MCF 10A (cell line): ENCODE measurements at regions of chr14 and their contacts with region 1.

Region 1: GRCh38 chr14:45526715-45527549 is 273.9 kb upstream of the MIS18BP1 start:
- DNase-seq: peak; percentile 76
- H3K4me3 Mint-ChIP-seq: no peak overlapping the region
- H3K27ac Mint-ChIP-seq: no peak overlapping the region
- H3K4me1 Mint-ChIP-seq: no peaks in the 10 kb centered on the region
- H3K27me3 Mint-ChIP-seq: no peaks in the 10 kb centered on the region
- CTCF ChIP-seq: peak; percentile 75

Region 2: DNA sequence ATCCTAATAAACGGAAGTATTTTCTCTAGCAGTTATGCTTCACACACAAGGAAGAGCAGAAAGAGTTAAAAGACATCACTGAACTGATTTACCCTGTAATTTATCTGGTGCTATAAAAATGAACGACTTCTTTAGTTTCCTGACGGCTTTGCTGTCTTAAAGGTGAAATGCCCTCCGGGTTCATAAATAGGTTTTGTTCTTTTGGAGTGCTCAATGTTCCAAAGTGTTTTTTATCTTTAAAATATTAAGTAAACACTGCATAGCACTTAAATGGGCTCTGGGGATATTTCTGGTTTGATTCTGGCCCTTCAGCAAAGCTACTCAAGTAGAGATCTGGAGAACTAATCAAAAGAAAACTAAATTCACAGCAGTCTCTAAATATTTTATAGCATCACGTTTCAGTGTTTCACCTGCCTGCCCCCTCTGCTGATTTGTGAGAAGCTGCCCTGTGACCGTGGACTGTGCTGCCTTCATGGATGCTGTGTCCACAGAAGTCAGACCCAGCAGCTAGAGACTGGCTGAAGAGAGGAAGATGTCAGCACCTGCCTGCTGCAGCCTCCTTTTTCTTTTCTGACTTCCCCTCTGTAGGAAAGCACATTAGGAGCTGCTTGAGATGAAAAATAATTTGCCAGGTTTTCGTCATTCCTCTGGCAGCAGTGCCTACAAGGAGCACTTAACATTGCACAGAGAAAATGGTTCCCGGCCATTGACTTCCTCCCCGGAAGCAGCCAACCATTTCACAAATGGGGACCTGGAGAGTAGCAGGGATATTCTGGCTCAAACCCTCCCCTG is 814.7 kb before region 1 on chr14:
- CTCF ChIA-PET with region 1: no interaction called
- POLR2A ChIA-PET with region 1: no interaction called
- intact Hi-C with region 1: no loop called
- DNase-seq: no peak
- H3K4me3 Mint-ChIP-seq: no peak overlapping the region
- H3K27ac Mint-ChIP-seq: no peak overlapping the region
- H3K4me1 Mint-ChIP-seq: no peaks in the 10 kb centered on the region
- H3K27me3 Mint-ChIP-seq: no peaks in the 10 kb centered on the region
- CTCF ChIP-seq: no peak

Region 3: DNA sequence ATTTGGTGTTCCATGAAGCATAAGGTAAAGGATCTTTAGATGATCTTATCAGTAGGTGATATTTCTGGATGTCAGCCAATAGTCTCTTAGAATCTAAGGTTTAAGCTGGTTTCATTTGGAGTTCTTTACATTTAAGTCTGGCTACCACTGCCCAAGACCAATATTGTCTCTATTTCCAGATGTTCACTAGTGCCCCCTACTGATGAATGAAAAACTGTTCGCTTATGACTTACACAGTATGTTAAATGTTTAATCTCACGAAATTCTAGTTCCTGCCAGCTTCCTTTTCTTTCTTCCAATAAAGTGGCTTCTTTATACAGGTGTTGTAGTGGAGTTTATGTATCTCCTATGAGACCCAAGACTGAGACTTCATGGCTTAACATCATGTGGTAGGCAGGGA is 242.1 kb before region 1 on chr14:
- CTCF ChIA-PET with region 1: interaction called, 5 read pairs
- POLR2A ChIA-PET with region 1: no interaction called
- intact Hi-C with region 1: loop called (anchors 2 kb)
- DNase-seq: no peak
- H3K4me3 Mint-ChIP-seq: no peak overlapping the region
- H3K27ac Mint-ChIP-seq: no peak overlapping the region
- H3K4me1 Mint-ChIP-seq: no peaks in the 10 kb centered on the region
- H3K27me3 Mint-ChIP-seq: no peaks in the 10 kb centered on the region
- CTCF ChIP-seq: no peak

Region 4: GRCh38 chr14:45426670-45427282 is 100.2 kb before region 1 on chr14:
- CTCF ChIA-PET with region 1: interaction called, 47 read pairs
- POLR2A ChIA-PET with region 1: interaction called, 3 read pairs
- intact Hi-C with region 1: loop called (anchors 1 kb)
- DNase-seq: peak; percentile 64
- H3K4me3 Mint-ChIP-seq: no peak overlapping the region
- H3K27ac Mint-ChIP-seq: no peak overlapping the region
- H3K4me1 Mint-ChIP-seq: no peaks in the 10 kb centered on the region
- H3K27me3 Mint-ChIP-seq: no peaks in the 10 kb centered on the region
- CTCF ChIP-seq: peak; percentile 57